Naive thymus-derived CD8-positive, alpha-beta T cell (primary cell): ENCODE measurements at regions of chr19 and their contacts with region 1.

Region 1: GRCh38 chr19:12495002-12495802 is 10.6 kb upstream of the ZNF709 start:
- DNase-seq: peak; percentile 83 to 97 (median 92)
- ATAC-seq: peak; percentile 98 to 99
- H3K4me3 Mint-ChIP-seq: peak overlapping the region; percentile 82 to 98 (median 93)
- H3K27ac Mint-ChIP-seq: peak overlapping the region; percentile 66 to 98 (median 96)
- H3K4me1 Mint-ChIP-seq: peaks cover 7 to 19% (median 15%) of the 10 kb centered on the region in 4 donors
- H3K27me3 Mint-ChIP-seq: peaks cover 0 to 2% (median 0%) of the 10 kb centered on the region in 5 donors

Region 2: DNA sequence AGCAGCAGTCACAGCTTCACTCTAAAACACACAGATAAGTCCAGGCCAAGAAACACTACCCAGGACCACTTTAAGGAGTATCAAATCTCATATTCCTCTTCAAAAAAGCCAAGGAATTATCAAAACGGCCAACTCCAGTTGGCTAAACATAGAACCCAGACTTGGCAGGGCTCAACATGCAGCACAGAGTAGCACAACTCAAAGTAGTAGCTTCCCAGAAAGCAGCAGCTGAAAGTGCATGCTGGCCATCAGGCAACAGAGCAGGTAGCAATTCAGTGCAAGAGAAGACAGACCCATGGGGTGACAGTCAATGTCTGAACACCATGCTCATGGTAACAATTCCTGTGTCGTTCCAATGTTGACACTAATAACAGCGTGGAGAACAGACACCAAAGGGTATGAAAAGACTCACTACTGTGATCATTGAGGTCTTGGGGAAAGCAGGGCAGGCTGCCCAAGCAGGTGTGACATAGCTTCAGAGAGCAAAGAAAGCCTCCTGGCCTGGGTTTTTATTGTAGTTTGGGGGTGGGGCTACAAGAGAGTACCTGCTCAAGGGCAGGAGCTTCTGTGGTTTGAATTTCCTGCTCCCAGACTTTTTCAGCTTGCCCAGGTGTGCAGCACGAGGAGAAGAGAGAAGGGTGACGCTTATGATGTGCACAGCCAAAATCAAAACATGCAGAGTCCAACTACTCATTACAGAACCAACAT is 16.8 kb before region 1 on chr19:
- POLR2A ChIA-PET with region 1: interaction called, 17 read pairs
- DNase-seq: peak in 1 of 10 donors; percentile 4
- ATAC-seq: peak; percentile 42 to 68
- H3K4me3 Mint-ChIP-seq: peak overlapping the region in 6 of 10 donors; percentile 4 to 63 (median 38)
- H3K27ac Mint-ChIP-seq: peak overlapping the region; percentile 42 to 88 (median 78)
- H3K4me1 Mint-ChIP-seq: peaks cover 24 to 48% (median 41%) of the 10 kb centered on the region in 4 donors
- H3K27me3 Mint-ChIP-seq: no peaks in the 10 kb centered on the region

Region 3: GRCh38 chr19:12484371-12485051 is 10.7 kb before region 1 on chr19 and contains the start of gene ZNF709:
- POLR2A ChIA-PET with region 1: interaction called, 17 read pairs
- DNase-seq: peak; percentile 83 to 93 (median 90)
- ATAC-seq: peak; percentile 96 to 97
- H3K4me3 Mint-ChIP-seq: peak within 1 kb of the TSS; percentile 92 to 97 (median 95)
- H3K27ac Mint-ChIP-seq: peak within 1 kb of the TSS; percentile 84 to 97 (median 94)
- H3K4me1 Mint-ChIP-seq: peaks cover 16 to 35% (median 34%) of the 10 kb centered on the region in 4 donors
- H3K27me3 Mint-ChIP-seq: no peaks in the 10 kb centered on the region
- polyA plus RNA-seq, gene ZNF709: 0.60 to 2.8 (median 1.3) TPM

Region 4: GRCh38 chr19:12551060-12551832 is 56.0 kb after region 1 on chr19 and contains the start of gene ZNF564:
- POLR2A ChIA-PET with region 1: interaction called, 17 read pairs
- DNase-seq: peak; percentile 72 to 98 (median 94)
- ATAC-seq: peak; percentile 98 to 99
- H3K4me3 Mint-ChIP-seq: peak within 1 kb of the TSS; percentile 95 to 100 (median 98)
- H3K27ac Mint-ChIP-seq: peak within 1 kb of the TSS; percentile 94 to 99 (median 97)
- H3K4me1 Mint-ChIP-seq: peaks cover 19 to 59% (median 48%) of the 10 kb centered on the region in 4 donors
- H3K27me3 Mint-ChIP-seq: peaks cover 0 to 2% (median 0%) of the 10 kb centered on the region in 5 donors
- polyA plus RNA-seq, gene ZNF564: 8.9 to 12.3 (median 10.0) TPM